ENCODE measurements at regions of chr15 and their contacts with region 1.

Region 1: GRCh38 chr15:64809649-64810496 is 15.6 kb downstream of the PIF1 start:
- DNase-seq: peak; percentile 74
- H3K4me3 ChIP-seq: no peak overlapping the region
- H3K27ac ChIP-seq: no peak overlapping the region
- H3K4me1 ChIP-seq: no peaks in the 10 kb centered on the region
- CTCF ChIP-seq: peak; percentile 99

Region 2: GRCh38 chr15:64667736-64668161 is 142.1 kb before region 1 on chr15:
- CTCF ChIA-PET with region 1: no interaction called
- POLR2A ChIA-PET with region 1: no interaction called
- intact Hi-C with region 1: no loop called
- DNase-seq: no peak
- H3K4me3 ChIP-seq: no peak overlapping the region
- H3K27ac ChIP-seq: no peak overlapping the region
- H3K4me1 ChIP-seq: no peaks in the 10 kb centered on the region
- CTCF ChIP-seq: no peak

Region 3: DNA sequence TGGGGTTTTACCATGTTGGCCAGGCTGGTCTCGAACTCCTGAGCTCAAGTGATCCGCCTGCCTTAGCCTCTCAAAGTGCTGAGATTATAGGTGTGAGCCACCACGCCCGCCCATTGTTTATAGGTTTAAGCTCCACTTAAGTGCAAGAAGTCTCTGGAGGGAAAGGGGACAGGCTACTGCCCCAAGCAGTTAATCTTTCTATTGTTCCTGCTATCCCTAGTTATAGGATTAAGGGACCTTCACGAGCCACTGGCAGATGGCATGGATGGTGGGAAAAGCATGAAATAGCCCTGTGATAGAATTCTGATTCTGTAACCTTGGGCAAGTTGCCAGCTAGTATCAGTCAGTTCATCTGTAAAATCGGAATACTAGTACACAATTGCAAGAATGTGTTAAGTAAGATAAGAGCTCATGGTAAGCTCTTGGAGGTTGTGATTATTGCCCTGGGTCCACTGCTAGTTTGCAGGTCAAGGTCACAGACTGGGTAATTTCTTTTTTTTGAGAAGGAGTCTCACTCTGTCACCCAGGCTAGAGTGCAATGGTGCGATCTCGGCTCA is 29.2 kb before region 1 on chr15:
- CTCF ChIA-PET with region 1: no interaction called
- POLR2A ChIA-PET with region 1: no interaction called
- intact Hi-C with region 1: no loop called
- DNase-seq: no peak
- H3K4me3 ChIP-seq: no peak overlapping the region
- H3K27ac ChIP-seq: no peak overlapping the region
- H3K4me1 ChIP-seq: no peaks in the 10 kb centered on the region
- CTCF ChIP-seq: no peak

Region 4: GRCh38 chr15:64836023-64836536 is 26.2 kb after region 1 on chr15:
- CTCF ChIA-PET with region 1: no interaction called
- POLR2A ChIA-PET with region 1: interaction called, 7 read pairs
- intact Hi-C with region 1: loop called (anchors 1 kb)
- DNase-seq: no peak
- H3K4me3 ChIP-seq: no peak overlapping the region
- H3K27ac ChIP-seq: peak overlapping the region; percentile 11
- H3K4me1 ChIP-seq: peaks cover 36% of the 10 kb centered on the region
- CTCF ChIP-seq: no peak; the same call in 1 of the 2 replicates

Measured in OCI-LY7 (cell line).